Activated T-helper 1 cell treated with anti-CD3 and anti-CD28 coated beads, Interleukin-12 subunit alpha, Interleukin-12 subunit beta, Interleukin-2, Interleukin-4 antibody, amounts not matched to agents 30 ng/mL and 10 ng/mL and 1 ng/mL, durations not matched to agents 14 hours and 24 hours and 36 hours (primary cell): ENCODE measurements at regions of chr10 and their contacts with region 1.

Region 1: DNA sequence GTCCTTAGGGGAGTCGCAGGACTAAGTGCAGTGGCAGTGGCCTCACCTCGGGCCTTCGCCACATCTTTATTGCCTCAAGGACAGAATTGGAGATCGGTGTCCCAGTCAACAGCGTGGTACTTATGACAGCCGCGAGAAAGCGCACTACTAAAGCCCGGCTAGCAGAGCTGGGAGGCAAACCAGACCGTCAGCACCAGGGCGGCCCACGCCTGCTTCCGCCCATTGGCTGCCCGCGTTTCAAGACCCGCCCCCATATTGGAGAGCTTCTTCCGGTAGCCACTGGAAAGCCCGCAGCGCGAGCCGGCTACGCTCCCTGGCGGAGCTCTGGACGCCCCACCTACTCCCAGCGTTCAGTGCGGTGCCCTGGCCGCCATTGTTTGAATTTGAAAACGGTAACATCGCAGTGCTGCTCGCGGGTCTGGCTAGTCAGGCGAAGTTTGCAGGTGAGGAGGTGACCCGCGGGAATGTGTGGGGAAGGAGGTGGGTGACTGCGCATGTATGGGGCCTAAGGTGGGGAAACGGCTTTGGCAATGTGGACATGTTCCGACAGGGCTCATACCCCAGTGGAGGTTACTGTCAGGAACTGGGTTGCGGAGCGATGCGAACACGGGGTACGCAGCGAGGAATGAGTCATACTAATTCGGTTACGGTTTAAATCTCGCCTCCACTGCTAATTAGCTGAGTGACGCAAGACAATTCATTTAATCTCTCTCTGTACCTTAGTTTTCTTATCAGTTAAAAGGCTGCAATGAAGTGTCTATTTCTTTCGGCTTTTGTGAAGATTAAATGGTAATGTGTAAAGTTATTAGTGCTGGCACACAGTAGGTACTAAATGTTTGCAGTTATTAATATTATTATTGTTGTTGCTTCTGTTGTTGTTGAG is at the start of gene KIF20B:
- DNase-seq: peak; percentile 96
- H3K4me3 Mint-ChIP-seq: peak within 1 kb of the TSS; percentile 91
- H3K27ac Mint-ChIP-seq: peak within 1 kb of the TSS; percentile 95
- H3K4me1 Mint-ChIP-seq: peaks cover 63% of the 10 kb centered on the region
- H3K27me3 Mint-ChIP-seq: no peaks in the 10 kb centered on the region
- total RNA-seq, gene KIF20B: 48.7 TPM in 2 replicates

Region 2: DNA sequence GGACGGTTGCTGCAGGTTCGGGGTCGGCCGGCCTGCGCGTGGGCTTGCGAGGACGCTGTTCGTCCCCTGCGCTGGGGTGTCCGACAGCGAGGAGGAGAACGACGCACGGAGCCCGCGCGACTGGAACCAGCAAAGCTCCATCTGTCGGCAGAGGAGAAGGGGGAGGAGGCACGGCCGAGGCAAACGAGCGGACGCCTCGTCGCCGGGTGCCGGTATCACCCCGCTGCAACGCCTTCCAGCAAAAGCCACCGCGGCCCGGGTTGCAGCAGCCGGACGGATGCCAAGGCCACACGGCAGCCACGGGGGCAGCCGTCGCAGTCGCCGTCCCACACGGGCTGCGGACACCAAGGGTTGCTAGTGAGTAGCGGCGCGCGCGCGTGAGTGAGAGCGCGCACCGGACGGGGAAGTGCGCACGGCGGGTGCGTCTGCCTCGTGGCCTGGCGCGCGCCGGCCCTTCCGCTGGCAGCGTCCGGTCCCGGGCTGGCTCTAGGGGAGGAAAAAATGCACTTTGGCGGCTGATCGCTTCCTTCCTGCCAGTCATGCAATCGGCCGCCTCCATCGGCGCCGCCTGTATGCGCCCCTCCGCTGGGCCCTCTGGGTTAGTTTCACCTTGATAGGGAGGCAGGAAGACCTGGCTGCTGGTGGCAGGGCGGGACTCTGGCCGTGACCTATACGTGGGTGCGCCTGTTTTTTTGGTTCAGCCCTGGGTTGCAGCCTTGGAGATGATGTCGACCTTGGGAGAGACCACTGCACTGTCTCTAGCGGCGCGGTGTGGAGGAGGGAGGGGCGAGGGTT is 821.0 kb before region 1 on chr10:
- intact Hi-C with region 1: loop called (anchors 10 kb)
- DNase-seq: peak; percentile 68
- H3K4me3 Mint-ChIP-seq: peak overlapping the region; percentile 98
- H3K27ac Mint-ChIP-seq: peak overlapping the region; percentile 99
- H3K4me1 Mint-ChIP-seq: peaks cover 74% of the 10 kb centered on the region
- H3K27me3 Mint-ChIP-seq: no peaks in the 10 kb centered on the region

Region 3: GRCh38 chr10:89391917-89392756 is 309.3 kb before region 1 on chr10 and contains the start of gene IFIT1:
- intact Hi-C with region 1: loop called (anchors 1 kb)
- DNase-seq: peak; percentile 42
- H3K4me3 Mint-ChIP-seq: peak within 1 kb of the TSS; percentile 86
- H3K27ac Mint-ChIP-seq: peak within 1 kb of the TSS; percentile 78
- H3K4me1 Mint-ChIP-seq: peaks cover 44% of the 10 kb centered on the region
- H3K27me3 Mint-ChIP-seq: peaks cover 4% of the 10 kb centered on the region
- total RNA-seq, gene IFIT1: 0.39 and 0.59 TPM in 2 replicates

Region 4: GRCh38 chr10:89414146-89414878 is 287.2 kb before region 1 on chr10 and contains the start of gene IFIT5:
- intact Hi-C with region 1: loop called (anchors 1 kb)
- DNase-seq: peak; percentile 65
- H3K4me3 Mint-ChIP-seq: peak within 1 kb of the TSS; percentile 92
- H3K27ac Mint-ChIP-seq: peak within 1 kb of the TSS; percentile 97
- H3K4me1 Mint-ChIP-seq: peaks cover 72% of the 10 kb centered on the region
- H3K27me3 Mint-ChIP-seq: no peaks in the 10 kb centered on the region
- total RNA-seq, gene IFIT5: 8.7 TPM in 2 replicates

Region 5: GRCh38 chr10:89643431-89644331 is 57.8 kb before region 1 on chr10:
- intact Hi-C with region 1: loop called (anchors 1 kb)
- DNase-seq: peak; percentile 68
- H3K4me3 Mint-ChIP-seq: no peak overlapping the region
- H3K27ac Mint-ChIP-seq: no peak overlapping the region
- H3K4me1 Mint-ChIP-seq: peaks cover 7% of the 10 kb centered on the region
- H3K27me3 Mint-ChIP-seq: peaks cover 14% of the 10 kb centered on the region

Region 6: DNA sequence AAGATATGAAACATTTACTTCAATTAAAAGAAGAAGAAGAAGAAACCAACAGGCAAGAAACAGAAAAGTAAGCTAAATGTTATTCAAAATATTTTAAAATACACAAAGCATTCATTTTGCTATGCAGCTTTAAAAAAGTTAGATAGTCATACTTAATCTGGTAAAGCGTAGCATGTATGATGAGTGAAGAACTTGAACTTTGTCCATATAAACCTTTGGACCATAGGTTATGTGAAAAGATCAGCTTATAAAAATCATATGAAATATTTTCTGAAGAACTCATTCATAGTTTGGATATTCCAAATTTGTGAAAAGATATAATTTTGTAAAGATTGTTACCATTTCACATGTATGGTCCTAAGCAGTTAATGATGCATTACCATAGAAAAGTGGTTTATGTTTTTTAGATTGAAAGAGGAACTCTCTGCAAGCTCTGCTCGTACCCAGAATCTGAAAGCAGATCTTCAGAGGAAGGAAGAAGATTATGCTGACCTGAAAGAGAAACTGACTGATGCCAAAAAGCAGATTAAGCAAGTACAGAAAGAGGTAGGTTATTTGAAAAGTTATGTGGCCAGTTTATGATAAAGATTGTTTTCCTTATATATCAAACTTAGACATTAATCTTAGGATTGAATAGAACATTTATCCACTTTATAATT is 37.2 kb after region 1 on chr10:
- intact Hi-C with region 1: loop called (anchors 2 kb)
- DNase-seq: no peak
- H3K4me3 Mint-ChIP-seq: peak overlapping the region; percentile 67
- H3K27ac Mint-ChIP-seq: peak overlapping the region; percentile 83
- H3K4me1 Mint-ChIP-seq: peaks cover 43% of the 10 kb centered on the region
- H3K27me3 Mint-ChIP-seq: no peaks in the 10 kb centered on the region

Region 7: DNA sequence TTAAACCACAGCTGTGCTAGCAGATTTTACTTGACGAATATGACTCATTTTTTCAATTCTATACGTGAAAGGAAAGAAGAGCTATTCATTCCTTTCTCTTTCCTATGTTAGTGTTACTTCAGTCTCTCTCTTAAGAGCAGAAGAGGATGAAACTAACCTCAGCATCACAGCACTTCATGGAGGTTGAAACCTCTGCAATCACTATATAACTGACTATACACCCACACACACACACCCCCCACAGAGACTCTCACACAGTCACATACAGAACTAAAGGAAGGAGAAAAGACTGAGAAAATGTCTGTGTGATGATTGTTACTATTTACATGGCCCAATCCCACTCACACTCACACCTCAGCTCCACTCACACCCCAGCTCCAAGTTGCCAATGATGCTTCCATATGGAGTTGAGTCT is 104.1 kb after region 1 on chr10:
- intact Hi-C with region 1: no loop called
- DNase-seq: no peak
- H3K4me3 Mint-ChIP-seq: no peak overlapping the region
- H3K27ac Mint-ChIP-seq: peak overlapping the region; percentile 42
- H3K4me1 Mint-ChIP-seq: peaks cover 31% of the 10 kb centered on the region
- H3K27me3 Mint-ChIP-seq: peaks cover 29% of the 10 kb centered on the region

Region 8: DNA sequence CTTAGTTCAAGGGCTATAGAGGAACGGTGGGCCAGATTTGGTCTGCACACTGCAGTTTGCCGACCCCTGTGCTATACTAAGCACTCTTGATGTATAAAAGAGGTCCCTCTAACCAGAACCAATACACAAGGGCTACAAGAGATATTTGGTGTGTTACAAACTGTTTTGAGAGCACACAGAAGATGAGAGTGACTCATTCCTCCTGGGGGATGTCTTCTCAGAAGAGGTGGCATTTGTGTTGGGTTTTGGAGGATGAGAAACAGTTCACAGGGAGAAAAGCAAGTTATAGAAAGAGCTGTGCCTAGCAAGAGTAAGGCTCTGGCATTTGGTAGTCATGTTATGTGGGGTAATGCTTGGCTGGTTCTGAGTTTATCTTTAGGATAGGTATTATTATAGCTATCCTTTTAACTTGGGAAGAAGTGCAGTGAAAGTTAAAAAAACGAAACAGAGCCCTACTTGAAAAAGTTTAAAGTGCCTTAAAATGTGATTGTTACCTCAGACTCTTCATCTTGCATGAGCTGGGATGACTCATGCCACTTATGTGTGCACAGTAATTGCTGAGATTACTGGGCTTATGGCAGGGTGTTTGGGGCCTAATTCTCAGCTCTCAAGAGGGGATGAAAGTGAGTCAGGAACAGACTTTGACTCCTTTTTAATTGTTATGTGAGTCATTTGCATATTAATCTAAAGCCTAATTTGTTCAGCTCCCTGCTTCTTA is 160.3 kb after region 1 on chr10:
- intact Hi-C with region 1: loop called (anchors 10 kb)
- DNase-seq: no peak
- H3K4me3 Mint-ChIP-seq: peak overlapping the region; percentile 13
- H3K27ac Mint-ChIP-seq: peak overlapping the region; percentile 79
- H3K4me1 Mint-ChIP-seq: peaks cover 20% of the 10 kb centered on the region
- H3K27me3 Mint-ChIP-seq: peaks cover 2% of the 10 kb centered on the region